Common myeloid progenitor, CD34-positive (primary cell): ENCODE measurements at regions of chr3 and their contacts with region 1.

Region 1: GRCh38 chr3:126208618-126209256 is 28.4 kb upstream of the ALDH1L1 start:
- DNase-seq: peak in 2 of 3 donors; percentile 3 to 20
- H3K4me3 ChIP-seq: no peak overlapping the region
- H3K27ac ChIP-seq: no peak overlapping the region
- H3K4me1 ChIP-seq: peaks cover 0 to 15% (median 9%) of the 10 kb centered on the region in 4 experiments
- H3K27me3 ChIP-seq: peaks cover 2 to 45% (median 15%) of the 10 kb centered on the region in 5 experiments

Region 2: DNA sequence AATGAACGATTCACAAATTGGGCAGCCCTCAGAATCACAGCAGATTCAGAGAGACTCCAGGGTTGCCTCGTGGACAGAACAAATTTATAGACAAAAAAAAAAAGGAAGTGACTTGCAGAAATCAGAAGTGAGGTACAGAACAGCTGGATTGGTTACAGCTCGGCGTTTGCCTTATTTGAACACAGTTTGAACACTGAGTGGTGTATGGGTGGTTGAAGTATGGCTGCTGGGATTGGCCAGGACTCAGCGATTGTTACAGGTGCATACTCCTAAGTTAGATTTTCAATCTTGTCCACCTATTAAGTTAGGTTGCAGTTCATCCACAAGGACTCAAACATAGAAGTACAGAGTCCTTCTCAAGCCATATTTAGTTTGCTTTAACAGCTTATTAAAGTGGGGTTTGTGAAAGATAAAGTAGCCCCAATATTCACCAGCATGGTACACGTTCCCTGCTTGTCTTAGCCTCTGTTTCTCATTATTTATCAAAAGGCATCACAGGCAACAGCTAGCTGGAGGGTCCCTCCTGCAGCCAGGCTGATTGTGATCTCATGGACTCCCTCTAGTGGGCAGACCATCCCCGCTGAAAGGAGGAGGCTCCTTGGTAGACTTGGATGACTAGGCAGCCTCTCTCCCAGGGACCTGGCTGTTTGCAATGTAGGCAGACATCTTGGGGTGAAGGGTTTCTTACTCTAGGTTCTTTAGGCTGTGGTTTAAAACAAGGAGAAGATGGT is 10.7 kb before region 1 on chr3:
- CTCF ChIA-PET with region 1: interaction called, 20 read pairs
- POLR2A ChIA-PET with region 1: no interaction called
- DNase-seq: peak; percentile 67 to 75 (median 74)
- H3K4me3 ChIP-seq: peak overlapping the region in 1 of 7 experiments; percentile 30
- H3K27ac ChIP-seq: no peak overlapping the region
- H3K4me1 ChIP-seq: peaks cover 0 to 7% (median 0%) of the 10 kb centered on the region in 4 experiments
- H3K27me3 ChIP-seq: peaks cover 0 to 4% (median 0%) of the 10 kb centered on the region in 5 experiments

Region 3: GRCh38 chr3:126259411-126260391 is 51.0 kb after region 1 on chr3:
- CTCF ChIA-PET with region 1: no interaction called
- POLR2A ChIA-PET with region 1: no interaction called
- DNase-seq: peak in 2 of 3 donors; percentile 34 to 45
- H3K4me3 ChIP-seq: no peak overlapping the region
- H3K27ac ChIP-seq: no peak overlapping the region
- H3K4me1 ChIP-seq: peaks cover 0 to 13% (median 7%) of the 10 kb centered on the region in 4 experiments
- H3K27me3 ChIP-seq: peaks cover 0 to 9% (median 0%) of the 10 kb centered on the region in 5 experiments